Thyroid gland (tissue), 4 donors: ENCODE measurements at regions of chr22 and their contacts with region 1.

Region 1: DNA sequence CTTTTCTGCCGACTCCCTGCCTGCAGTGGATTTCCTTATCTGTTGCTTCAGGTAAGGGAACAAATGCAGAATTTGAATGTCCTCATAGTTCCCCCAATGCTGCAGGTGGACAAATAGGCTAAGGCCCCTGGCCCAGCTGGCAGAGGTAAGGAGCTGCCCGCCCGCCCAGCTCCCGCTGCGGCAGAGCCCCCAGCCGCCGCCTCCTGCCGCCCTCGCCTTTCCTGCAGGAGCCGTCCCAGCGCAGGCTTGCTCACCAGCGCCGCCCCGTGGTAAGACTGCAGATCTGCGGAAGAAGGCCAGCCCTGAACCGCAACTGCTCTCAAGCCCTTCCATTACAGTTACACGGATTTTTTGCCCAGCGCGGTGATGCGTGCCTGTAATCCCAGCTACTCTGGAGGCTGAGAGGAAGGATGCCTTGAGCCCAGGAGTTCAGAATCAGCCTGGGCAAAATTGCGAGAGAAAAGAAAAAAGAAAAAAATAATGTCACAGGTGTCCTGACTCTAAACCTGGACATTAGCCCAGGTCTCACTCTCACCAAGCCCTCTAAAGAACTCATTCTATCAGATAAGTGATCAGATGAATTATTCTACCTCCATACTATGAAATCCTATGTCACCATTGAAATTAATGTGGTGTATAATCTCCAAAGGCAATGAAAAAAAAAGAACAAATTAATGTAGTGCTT is 51.2 kb upstream of the EMID1 start:
- DNase-seq: peak; percentile 71 to 82
- H3K4me3 ChIP-seq: no peak overlapping the region
- H3K27ac ChIP-seq: peak overlapping the region in 1 of 3 donors; percentile 2
- H3K4me1 ChIP-seq: peaks cover 21 to 27% of the 10 kb centered on the region in 2 donors
- H3K27me3 ChIP-seq: no peaks in the 10 kb centered on the region
- CTCF ChIP-seq: peak; percentile 79 to 99 (median 91)
- POLR2A ChIP-seq: no peak

Region 2: DNA sequence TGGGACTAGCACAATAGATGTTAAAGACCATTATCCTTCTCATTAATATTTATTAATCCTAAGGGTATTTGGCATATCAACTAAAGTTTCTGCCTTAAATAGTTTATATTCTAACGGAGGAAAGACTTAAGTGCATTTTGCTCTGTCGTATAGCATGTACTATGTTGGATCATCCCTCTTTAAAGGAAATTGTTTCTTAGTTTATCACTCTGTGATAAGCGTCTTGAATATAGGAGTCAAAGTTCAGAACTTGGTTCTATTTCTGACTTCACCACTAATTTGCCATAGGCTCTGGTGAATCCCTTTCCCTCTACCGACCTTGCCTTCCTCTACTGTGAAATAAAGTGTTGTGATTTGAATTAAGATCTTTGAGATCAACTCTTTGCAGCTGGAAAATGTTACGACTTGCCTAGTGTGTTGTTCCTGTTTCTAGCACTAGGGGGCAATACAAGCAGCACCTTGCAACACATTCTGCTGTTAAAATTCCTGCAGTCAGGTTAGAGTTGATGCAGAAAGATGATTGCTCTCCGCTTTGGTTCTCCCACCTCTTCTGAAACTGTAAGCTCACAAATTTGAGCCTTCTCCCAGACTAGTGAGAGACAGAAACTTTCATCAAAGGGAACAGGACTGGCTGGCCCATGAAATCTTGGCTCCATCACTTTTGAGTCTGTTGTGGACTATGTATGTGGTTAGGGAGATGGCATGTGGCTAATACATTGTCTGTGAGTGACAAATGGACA is 299.0 kb before region 1 on chr22:
- intact Hi-C with region 1: loop called (anchors 5 kb)
- DNase-seq: peak; percentile 39 to 41
- H3K4me3 ChIP-seq: no peak overlapping the region
- H3K27ac ChIP-seq: no peak overlapping the region
- H3K4me1 ChIP-seq: no peaks in the 10 kb centered on the region
- H3K27me3 ChIP-seq: no peaks in the 10 kb centered on the region
- CTCF ChIP-seq: peak; percentile 65 to 99 (median 91)
- POLR2A ChIP-seq: no peak

Region 3: DNA sequence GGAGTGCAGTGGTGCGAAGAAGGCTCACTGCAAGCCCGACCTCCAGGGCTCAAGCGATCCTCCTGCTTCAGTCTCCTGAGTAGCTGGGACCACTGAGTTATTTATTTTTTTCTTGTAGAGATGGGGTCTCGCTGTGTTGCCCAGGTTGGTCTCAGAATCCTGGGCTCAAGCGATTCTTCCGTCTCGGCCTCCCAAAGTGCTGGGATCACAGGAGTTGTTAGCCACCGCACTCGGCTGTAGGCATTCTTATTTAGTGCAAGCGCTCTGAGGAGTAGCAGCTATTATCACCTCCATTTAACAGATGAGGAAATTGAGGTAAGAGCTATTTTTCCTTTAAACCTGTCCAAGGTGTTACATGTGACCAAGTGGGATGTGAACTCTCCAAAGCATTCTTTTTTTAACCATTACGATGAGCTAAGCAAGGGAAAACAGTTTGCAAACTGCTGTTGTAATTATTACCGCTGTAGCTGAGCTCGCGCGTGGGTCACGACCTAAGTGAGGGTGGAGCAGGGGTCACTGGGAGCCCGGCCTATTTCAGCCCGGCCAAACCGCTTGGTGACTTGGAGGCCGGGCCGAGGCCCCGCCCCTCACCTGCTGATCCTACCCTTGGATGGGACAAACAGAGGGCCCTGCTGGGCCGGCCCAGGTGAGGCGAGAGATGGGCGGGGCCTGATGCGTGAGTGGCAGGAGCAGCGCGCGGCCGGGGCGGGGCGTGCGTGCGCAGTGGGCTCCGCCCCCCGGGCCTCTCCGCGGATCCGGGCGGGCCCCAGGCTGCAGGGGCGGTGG is 82.1 kb before region 1 on chr22:
- intact Hi-C with region 1: loop called (anchors 10 kb)
- DNase-seq: peak; percentile 98 to 99
- H3K4me3 ChIP-seq: peak overlapping the region in 1 of 3 donors; percentile 24
- H3K27ac ChIP-seq: no peak overlapping the region
- H3K4me1 ChIP-seq: peaks cover 16 to 27% of the 10 kb centered on the region in 2 donors
- H3K27me3 ChIP-seq: no peaks in the 10 kb centered on the region
- CTCF ChIP-seq: no peak
- POLR2A ChIP-seq: no peak

Region 4: DNA sequence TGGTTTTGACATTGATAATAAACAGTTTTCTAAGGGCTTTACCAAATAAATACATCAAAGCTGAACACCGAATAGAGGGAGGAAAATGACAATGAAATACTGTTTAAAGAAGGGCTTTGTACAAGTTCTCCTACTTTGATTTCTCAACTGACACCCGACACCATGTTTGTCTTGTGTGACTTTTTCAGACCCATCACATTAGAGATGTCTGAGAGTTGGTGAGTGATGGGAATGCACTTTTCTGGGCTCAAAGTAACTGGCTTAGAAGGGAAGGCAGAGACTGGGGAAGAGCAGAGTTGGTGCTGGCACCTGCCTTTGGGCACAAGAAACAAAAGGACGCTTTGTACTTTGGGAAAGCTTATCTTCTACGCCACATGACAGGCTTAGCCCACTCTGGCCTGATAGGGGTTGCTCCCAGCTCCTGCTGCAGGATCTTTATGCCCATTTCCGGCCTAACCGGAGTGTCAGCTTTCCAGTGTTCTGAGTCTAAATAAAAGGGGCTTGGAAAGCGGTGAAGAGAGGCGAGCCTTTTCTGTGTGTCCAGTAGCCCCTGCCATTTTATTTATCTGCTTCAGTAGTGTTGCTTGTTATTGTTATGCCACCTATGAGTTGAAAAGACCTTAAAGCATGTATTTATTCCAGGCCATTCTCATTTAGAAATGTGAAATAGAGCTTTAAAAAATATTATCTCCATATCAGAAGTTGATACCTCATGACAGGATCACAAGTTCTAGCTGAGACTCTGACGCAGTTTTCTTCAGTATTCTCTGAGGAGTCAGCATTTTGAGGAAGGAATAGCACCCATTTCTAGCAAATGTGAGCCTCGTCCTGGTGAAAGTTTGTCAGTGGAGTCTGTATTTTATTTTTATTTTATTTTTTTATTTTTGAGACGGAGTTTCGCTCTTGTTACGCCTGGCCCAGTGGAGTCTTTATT is 57.5 kb before region 1 on chr22:
- intact Hi-C with region 1: no loop called
- DNase-seq: no peak
- H3K4me3 ChIP-seq: no peak overlapping the region
- H3K27ac ChIP-seq: no peak overlapping the region
- H3K4me1 ChIP-seq: peaks cover 22 to 25% of the 10 kb centered on the region in 2 donors
- H3K27me3 ChIP-seq: no peaks in the 10 kb centered on the region
- CTCF ChIP-seq: no peak
- POLR2A ChIP-seq: no peak